Heart left ventricle (tissue), 16 donors: ENCODE measurements at regions of chr14 and their contacts with region 1.

Region 1: GRCh38 chr14:103546652-103547454 is 15.6 kb downstream of the BAG5 start:
- DNase-seq: peak in 4 of 5 donors; percentile 64 to 89 (median 72)
- ATAC-seq: peak in 2 of 4 donors; percentile 10 to 28
- H3K4me3 ChIP-seq: no peak overlapping the region
- H3K27ac ChIP-seq: no peak overlapping the region
- H3K4me1 ChIP-seq: peaks cover 0 to 73% (median 55%) of the 10 kb centered on the region in 12 donors
- H3K27me3 ChIP-seq: no peaks in the 10 kb centered on the region
- CTCF ChIP-seq: peak; percentile 78 to 96 (median 91)
- POLR2A ChIP-seq: no peak

Region 2: GRCh38 chr14:103207029-103207387 is 339.8 kb before region 1 on chr14:
- intact Hi-C with region 1: no loop called
- DNase-seq: peak; percentile 71 to 91 (median 85)
- ATAC-seq: peak; percentile 73 to 93 (median 88)
- H3K4me3 ChIP-seq: peak overlapping the region in 11 of 12 donors; percentile 35 to 65 (median 52)
- H3K27ac ChIP-seq: peak overlapping the region in 10 of 12 donors; percentile 50 to 83 (median 68)
- H3K4me1 ChIP-seq: peaks cover 0 to 21% (median 4%) of the 10 kb centered on the region in 12 donors
- H3K27me3 ChIP-seq: peaks cover 0 to 29% (median 11%) of the 10 kb centered on the region in 9 donors
- CTCF ChIP-seq: no peak
- POLR2A ChIP-seq: no peak

Region 3: GRCh38 chr14:103483600-103483999 is 63.3 kb before region 1 on chr14:
- intact Hi-C with region 1: no loop called
- DNase-seq: no peak
- ATAC-seq: no peak
- H3K4me3 ChIP-seq: no peak overlapping the region
- H3K27ac ChIP-seq: no peak overlapping the region
- H3K4me1 ChIP-seq: peaks cover 0 to 13% (median 0%) of the 10 kb centered on the region in 12 donors
- H3K27me3 ChIP-seq: no peaks in the 10 kb centered on the region
- CTCF ChIP-seq: no peak
- POLR2A ChIP-seq: no peak

Region 4: DNA sequence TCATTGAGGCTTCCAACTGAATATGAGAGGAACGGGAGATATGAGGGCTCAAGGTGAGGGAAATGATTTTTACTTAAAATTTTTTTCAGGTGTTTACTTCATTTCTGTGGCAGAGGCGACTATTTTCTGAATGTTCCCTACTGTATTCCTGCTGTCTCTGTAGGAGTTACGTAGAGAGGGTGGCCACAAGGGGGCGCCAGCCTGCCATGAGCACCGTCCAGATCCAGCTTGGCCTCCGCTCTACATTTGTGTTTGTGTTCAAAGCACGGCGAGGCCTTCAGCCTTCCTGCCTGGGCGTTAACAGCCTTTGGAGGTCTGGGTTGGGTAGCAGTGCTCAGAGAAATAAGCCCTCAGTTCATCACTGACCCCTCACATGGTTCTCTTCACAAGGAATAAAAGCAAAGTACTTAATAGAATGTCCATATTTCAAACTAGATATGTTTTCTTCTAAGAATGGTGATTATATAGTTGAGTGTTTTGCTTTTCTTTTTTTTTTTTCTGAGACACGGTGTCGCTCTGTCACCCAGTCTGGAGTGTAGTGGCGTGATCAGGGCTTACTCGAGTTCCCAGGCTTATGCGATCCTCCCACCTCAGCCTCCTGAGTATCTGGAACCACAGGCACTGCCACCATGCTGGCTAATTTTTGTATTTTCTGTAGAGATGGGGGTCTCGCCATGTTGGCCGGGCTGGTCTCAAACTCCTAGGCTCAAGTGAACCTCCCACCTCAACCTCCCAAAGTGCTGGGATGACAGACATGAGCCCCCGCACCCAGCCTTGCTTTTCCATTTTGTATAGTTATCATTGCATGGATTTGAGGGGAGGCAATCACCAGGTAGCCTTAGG is 46.5 kb before region 1 on chr14:
- intact Hi-C with region 1: loop called in 8 of 10 experiments (anchors 1 to 5 kb)
- DNase-seq: peak; percentile 86 to 94 (median 88)
- ATAC-seq: peak; percentile 73 to 91 (median 86)
- H3K4me3 ChIP-seq: no peak overlapping the region
- H3K27ac ChIP-seq: peak overlapping the region in 6 of 12 donors; percentile 31 to 52 (median 42)
- H3K4me1 ChIP-seq: peaks cover 0 to 24% (median 13%) of the 10 kb centered on the region in 12 donors
- H3K27me3 ChIP-seq: no peaks in the 10 kb centered on the region
- CTCF ChIP-seq: peak in 11 of 12 donors; percentile 85 to 97 (median 94)
- POLR2A ChIP-seq: no peak

Region 5: DNA sequence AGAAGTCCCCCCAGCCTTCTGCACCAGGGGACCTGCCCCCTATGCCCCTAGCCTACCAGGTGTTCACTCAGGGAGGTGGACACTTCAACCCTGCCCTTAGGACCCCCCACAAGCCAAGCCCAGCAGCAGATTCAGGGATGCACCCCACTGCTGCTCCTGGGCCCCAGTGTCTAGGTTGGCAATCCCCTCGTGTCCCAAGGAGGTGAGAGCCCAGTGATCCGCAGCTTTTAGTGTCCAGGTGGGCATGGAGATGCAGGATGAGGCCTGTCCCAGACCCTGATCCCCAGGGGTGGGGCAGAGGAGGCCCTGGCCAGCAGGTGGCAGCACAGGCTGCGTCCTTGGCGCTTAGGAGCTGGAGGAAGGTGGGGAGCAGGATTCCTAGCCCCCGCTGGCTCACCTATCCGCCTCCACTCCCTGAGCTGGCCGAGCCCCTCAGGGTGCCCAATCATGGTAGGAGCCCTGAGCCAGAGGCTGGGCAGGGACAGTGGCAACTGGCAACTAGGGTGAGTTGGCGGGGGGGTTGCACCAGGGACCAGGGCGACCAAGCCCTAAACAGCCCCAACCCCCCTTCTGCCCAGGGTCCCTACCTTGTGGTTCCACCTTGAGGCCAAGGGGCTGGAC is 28.3 kb before region 1 on chr14:
- intact Hi-C with region 1: loop called (anchors 1 to 5 kb)
- DNase-seq: peak; percentile 64 to 85 (median 70)
- ATAC-seq: peak; percentile 34 to 62 (median 42)
- H3K4me3 ChIP-seq: no peak overlapping the region
- H3K27ac ChIP-seq: peak overlapping the region in 9 of 12 donors; percentile 2 to 96 (median 56)
- H3K4me1 ChIP-seq: peaks cover 0 to 79% (median 52%) of the 10 kb centered on the region in 12 donors
- H3K27me3 ChIP-seq: peaks cover 0 to 27% (median 0%) of the 10 kb centered on the region in 9 donors
- CTCF ChIP-seq: peak; percentile 83 to 97 (median 91)
- POLR2A ChIP-seq: no peak